ENCODE measurements at regions of chr5 and their contacts with region 1.

Region 1: DNA sequence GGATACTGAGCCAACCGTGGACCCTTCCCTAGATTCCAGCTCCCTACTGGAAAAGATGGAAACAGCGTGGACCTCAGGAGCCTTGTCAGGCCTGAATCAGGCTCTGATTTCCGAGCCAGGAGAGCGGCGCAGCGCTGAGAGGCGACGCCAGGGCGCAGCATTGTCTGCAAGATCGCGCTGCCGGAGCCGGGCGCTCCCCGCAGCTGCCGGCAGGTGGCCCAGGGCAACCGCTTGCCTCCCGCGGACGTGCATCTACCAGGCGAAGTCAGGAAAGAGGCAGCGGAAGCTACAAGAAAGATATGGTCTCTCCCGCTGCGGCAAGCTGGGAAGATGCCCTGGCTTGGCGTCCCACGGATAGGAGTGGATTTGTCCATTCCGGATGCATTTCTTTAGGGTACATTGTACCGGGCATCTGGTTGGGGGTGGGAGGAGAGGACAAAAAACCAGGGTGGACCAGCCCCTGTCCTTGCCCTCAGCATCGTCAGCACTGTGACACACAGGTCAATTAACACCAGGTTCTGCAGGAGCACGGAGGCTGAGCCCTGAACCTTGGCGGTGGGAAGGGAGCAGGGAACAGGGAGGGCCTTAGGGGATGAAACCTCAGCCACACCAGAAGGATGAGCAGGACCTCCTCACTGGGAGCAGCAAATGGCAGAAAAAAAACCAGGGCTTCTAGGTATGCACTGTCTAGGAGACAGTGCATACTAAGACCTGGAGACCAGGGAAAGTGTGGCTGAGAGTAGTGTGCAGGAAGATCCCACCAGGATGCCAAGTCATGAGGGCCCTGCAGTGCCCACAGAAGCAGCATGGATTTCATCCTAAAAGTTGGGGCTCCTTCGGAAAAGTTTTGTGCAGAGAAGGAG is 55.9 kb downstream of the SFXN1 start:
- DNase-seq: peak; percentile 7
- H3K4me3 ChIP-seq: no peak overlapping the region
- H3K27me3 ChIP-seq: no peaks in the 10 kb centered on the region
- CTCF ChIP-seq: peak; percentile 98

Region 2: DNA sequence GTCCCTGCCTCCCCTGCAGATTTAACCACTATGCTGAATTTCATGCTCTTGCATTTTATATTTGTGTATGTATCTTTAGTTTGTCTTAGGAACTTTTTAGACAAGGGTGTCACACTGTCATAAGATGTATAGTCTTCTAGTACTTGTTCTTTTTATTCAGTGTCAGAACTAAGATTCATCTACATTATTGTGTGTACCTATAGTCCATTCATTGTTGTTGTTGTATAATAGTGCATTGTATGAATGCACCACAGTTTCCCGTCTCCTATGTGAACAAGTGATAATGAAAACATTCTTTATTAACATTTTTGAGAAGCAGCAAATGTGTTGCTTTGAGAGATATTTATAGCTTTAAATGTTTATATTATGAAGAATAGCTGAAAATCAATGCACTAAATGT is 10.1 kb before region 1 on chr5:
- CTCF ChIA-PET with region 1: interaction called, 10 read pairs
- POLR2A ChIA-PET with region 1: no interaction called
- DNase-seq: no peak
- H3K4me3 ChIP-seq: no peak overlapping the region
- H3K27me3 ChIP-seq: no peaks in the 10 kb centered on the region
- CTCF ChIP-seq: no peak

Region 3: GRCh38 chr5:175681045-175681967 is 147.0 kb after region 1 on chr5:
- CTCF ChIA-PET with region 1: no interaction called
- POLR2A ChIA-PET with region 1: no interaction called
- DNase-seq: no peak
- H3K4me3 ChIP-seq: no peak overlapping the region
- H3K27me3 ChIP-seq: no peaks in the 10 kb centered on the region
- CTCF ChIP-seq: no peak